ENCODE measurements at regions of chr2 and their contacts with region 1.

Region 1: DNA sequence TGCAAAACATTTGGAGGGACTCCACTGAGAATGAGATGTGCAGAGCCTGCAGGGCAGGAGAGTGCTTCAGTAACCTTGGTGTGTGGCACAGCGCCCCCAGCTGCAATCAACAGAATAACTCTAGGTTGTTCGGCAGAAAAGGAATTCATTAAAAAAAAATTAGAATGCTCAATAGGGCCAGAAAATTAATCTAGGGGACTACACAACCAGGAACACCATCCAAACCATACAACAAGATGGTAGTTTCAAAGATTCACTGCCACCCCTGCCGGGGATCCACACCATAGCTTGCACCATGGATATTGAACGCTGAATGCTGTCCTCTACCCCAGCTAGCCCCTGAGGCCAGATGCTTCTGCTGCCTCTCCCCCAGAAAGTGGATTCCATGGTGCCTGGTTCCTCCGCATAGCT is 50.1 kb downstream of the THUMPD2 start:
- DNase-seq: peak; percentile 34
- CTCF ChIP-seq: peak; percentile 52

Region 2: GRCh38 chr2:39513641-39514094 is 215.3 kb before region 1 on chr2:
- CTCF ChIA-PET with region 1: interaction called, 14 read pairs
- POLR2A ChIA-PET with region 1: no interaction called
- DNase-seq: peak; percentile 59
- CTCF ChIP-seq: peak; percentile 56

Region 3: DNA sequence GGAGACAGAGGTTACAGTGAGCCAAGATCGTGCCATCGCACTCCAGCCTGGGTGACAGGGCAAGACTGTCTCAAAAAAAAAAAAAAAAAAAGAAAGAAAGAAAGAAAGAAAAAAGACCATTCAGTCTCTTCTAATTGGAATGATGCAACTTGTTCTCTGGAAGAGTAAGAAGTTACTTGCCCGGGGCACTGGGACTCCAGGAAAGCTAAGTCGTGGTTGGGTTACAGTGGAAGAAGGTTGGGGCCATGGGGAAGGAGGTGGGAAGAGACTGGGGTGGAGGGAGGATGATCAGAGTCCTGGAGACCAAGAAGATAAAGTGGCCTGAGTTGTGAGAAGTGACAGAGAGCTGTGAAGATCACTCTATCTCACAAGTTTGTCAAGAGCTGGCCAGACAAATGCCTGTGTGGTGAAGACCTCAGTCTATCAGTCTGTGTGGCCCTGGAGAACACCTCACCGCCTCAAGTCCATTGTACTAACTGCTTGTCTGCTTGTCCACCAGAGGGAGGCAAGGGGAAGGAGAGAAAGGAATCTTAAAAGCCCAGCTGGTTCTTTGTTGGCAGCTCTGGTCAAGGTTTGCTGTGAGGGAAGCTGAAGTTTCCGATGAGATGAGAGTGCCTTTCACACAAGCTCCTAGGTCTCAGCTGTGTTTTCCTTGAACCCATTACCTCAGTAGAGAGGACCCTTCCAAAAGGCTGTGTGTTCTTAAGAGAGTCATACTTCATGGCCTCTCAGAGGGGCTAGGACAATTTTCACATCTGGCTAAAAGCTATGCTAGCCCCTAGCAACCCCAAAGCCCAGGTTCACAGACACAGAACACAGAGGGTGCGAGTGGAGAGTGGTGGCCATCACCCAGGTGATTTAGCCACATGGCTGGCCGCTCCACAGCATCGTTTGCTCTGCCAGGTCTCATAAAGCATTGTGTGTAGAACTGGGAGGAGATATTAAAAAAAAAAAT is 135.2 kb before region 1 on chr2:
- CTCF ChIA-PET with region 1: interaction called, 12 read pairs
- POLR2A ChIA-PET with region 1: no interaction called
- DNase-seq: peak; percentile 22
- CTCF ChIP-seq: peak; percentile 38

Region 4: GRCh38 chr2:39778962-39779851 is 50.3 kb after region 1 on chr2 and contains the start of gene THUMPD2:
- CTCF ChIA-PET with region 1: no interaction called
- POLR2A ChIA-PET with region 1: no interaction called
- DNase-seq: peak; percentile 81
- CTCF ChIP-seq: no peak